Sigmoid colon (tissue), 7 donors: ENCODE measurements at regions of chr7 and their contacts with region 1.

Region 1: GRCh38 chr7:92633211-92633906 is 43.2 kb upstream of the FAM133B start:
- DNase-seq: no peak
- H3K4me3 ChIP-seq: peak overlapping the region in 1 of 4 donors; percentile 4
- H3K27ac ChIP-seq: peak overlapping the region; percentile 23 to 72 (median 70)
- H3K4me1 ChIP-seq: peaks cover 0 to 36% (median 23%) of the 10 kb centered on the region in 4 donors
- H3K27me3 ChIP-seq: no peaks in the 10 kb centered on the region
- CTCF ChIP-seq: no peak
- EP300 ChIP-seq: peak in 1 of 4 donors; percentile 11
- POLR2A ChIP-seq: no peak

Region 2: DNA sequence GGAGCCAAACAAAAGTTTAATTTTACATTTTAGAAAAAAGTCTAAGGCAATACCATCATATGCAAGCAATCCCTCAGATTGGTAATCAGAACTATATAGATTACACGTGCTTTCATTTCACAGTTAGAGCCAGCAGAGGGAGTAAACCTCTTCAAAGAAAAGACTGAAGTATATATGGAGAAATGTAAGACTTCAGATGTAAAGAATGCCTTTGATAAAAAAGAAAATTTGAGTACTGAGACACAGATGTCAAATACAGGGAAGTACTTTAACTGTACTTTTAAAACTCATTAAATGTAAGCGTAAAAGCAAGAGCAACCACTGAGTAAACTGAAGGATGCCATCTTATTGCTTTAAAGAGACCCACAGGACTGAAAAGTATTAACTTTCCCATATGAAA is 58.2 kb after region 1 on chr7:
- intact Hi-C with region 1: loop called (anchors 5 kb)
- DNase-seq: no peak
- H3K4me3 ChIP-seq: no peak overlapping the region
- H3K27ac ChIP-seq: no peak overlapping the region
- H3K4me1 ChIP-seq: peaks cover 0 to 16% (median 3%) of the 10 kb centered on the region in 4 donors
- H3K27me3 ChIP-seq: no peaks in the 10 kb centered on the region
- CTCF ChIP-seq: peak in 3 of 4 experiments; percentile 48 to 55 (median 52)
- EP300 ChIP-seq: no peak
- POLR2A ChIP-seq: no peak

Region 3: DNA sequence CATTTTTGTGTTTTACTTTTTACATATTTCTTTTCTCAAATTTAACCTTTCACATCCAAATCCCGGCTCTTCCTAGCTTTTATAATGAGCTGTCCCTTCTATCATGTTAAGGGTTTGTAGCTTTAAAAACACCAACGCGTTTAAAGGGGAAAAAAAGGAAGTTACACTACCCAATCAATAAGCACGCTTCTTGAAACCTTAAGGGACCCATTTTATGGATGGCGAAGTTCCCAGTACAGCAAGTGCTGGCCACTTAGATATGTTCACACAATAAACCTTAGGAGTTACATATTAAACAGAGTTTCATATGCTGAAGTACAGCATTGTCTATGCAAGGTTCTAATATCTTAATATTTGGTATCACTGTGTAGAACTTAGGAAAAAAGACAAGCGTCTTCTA is 1289.9 kb after region 1 on chr7:
- intact Hi-C with region 1: no loop called
- DNase-seq: no peak
- H3K4me3 ChIP-seq: peak overlapping the region; percentile 49 to 74 (median 63)
- H3K27ac ChIP-seq: peak overlapping the region; percentile 85 to 92 (median 88)
- H3K4me1 ChIP-seq: peaks cover 0 to 61% (median 23%) of the 10 kb centered on the region in 4 donors
- H3K27me3 ChIP-seq: no peaks in the 10 kb centered on the region
- CTCF ChIP-seq: no peak
- EP300 ChIP-seq: no peak
- POLR2A ChIP-seq: no peak